BJ (cell line): ENCODE measurements at regions of chr5 and their contacts with region 1.

Region 1: GRCh38 chr5:57751710-57752109 is 269.1 kb upstream of the ACTBL2 start:
- DNase-seq: peak; percentile 60
- H3K4me3 ChIP-seq: no peak overlapping the region
- H3K27me3 ChIP-seq: no peaks in the 10 kb centered on the region
- CTCF ChIP-seq: no peak

Region 2: GRCh38 chr5:56993241-56993640 is 758.5 kb before region 1 on chr5:
- CTCF ChIA-PET with region 1: no interaction called
- POLR2A ChIA-PET with region 1: no interaction called
- DNase-seq: no peak
- H3K4me3 ChIP-seq: no peak overlapping the region
- H3K27me3 ChIP-seq: peaks cover 1% of the 10 kb centered on the region
- CTCF ChIP-seq: no peak

Region 3: GRCh38 chr5:57482671-57483106 is 269.0 kb before region 1 on chr5 and contains the start of gene ACTBL2:
- CTCF ChIA-PET with region 1: no interaction called
- POLR2A ChIA-PET with region 1: interaction called, 12 read pairs
- DNase-seq: peak; percentile 64
- H3K4me3 ChIP-seq: no peak within 1 kb of the TSS
- H3K27me3 ChIP-seq: no peaks in the 10 kb centered on the region
- CTCF ChIP-seq: no peak
- polyA plus RNA-seq, gene ACTBL2: 0.05 and 0.07 TPM in 2 replicates